Brain microvascular endothelial cell (primary cell): ENCODE measurements at regions of chr11 and their contacts with region 1.

Region 1: GRCh38 chr11:10824888-10825287 is 16.2 kb upstream of the EIF4G2 start:
- DNase-seq: no peak
- H3K4me3 ChIP-seq: no peak overlapping the region
- H3K27ac ChIP-seq: no peak overlapping the region
- H3K27me3 ChIP-seq: no peaks in the 10 kb centered on the region
- CTCF ChIP-seq: no peak

Region 2: GRCh38 chr11:10758957-10759356 is 65.9 kb before region 1 on chr11:
- in situ Hi-C with region 1: no loop called
- DNase-seq: no peak
- H3K4me3 ChIP-seq: no peak overlapping the region
- H3K27ac ChIP-seq: no peak overlapping the region
- H3K27me3 ChIP-seq: no peaks in the 10 kb centered on the region
- CTCF ChIP-seq: no peak

Region 3: DNA sequence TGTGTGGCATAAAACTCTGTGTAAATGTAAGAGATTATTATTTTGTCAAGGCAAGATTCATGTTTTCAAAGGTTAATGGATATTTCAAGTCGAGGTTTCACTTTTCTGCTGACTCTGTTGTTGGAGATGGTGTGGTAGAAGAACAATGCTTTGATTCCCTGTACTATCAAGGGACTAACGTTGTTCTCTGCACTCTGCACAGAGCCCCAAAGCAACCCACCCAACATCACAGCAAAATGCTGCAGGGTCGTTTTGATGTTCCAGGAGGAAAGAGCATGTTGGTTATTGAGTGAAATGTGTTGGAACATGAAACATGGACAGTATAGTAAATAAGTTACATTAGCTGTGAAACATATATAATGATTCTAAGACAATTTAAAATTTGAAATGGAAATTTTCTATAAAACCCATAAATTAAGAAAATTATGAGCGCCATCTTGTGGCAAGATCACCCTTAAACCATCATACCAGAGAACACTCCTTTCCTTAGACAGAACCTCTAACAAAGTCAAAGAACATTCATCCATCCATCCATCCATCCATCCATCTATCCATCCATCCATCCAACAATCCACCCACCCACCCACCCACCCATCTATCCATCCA is 197.3 kb after region 1 on chr11:
- in situ Hi-C with region 1: loop called (anchors 25 kb)
- DNase-seq: peak; percentile 16
- H3K4me3 ChIP-seq: no peak overlapping the region
- H3K27ac ChIP-seq: no peak overlapping the region
- H3K27me3 ChIP-seq: no peaks in the 10 kb centered on the region
- CTCF ChIP-seq: peak; percentile 37